Panc1 (cell line): ENCODE measurements at regions of chr11 and their contacts with region 1.

Region 1: GRCh38 chr11:117621226-117621625 is 175.8 kb downstream of the DSCAML1 start:
- DNase-seq: no peak
- ATAC-seq: peak; percentile 68
- H3K4me3 ChIP-seq: no peak overlapping the region
- H3K27ac ChIP-seq: no peak overlapping the region
- H3K4me1 ChIP-seq: no peaks in the 10 kb centered on the region
- H3K27me3 ChIP-seq: peaks cover 2% of the 10 kb centered on the region; the same call in 1 of the 2 replicates
- CTCF ChIP-seq: peak; percentile 83

Region 2: GRCh38 chr11:117199061-117199915 is 421.9 kb before region 1 on chr11 and contains the start of gene TAGLN:
- CTCF ChIA-PET with region 1: no interaction called
- POLR2A ChIA-PET with region 1: no interaction called
- in situ Hi-C with region 1: no loop called
- intact Hi-C with region 1: no loop called
- DNase-seq: no peak
- ATAC-seq: peak; percentile 43
- H3K4me3 ChIP-seq: peak within 1 kb of the TSS in 1 of 2 experiments; percentile 11; a peak in 1 of 4 replicates
- H3K27ac ChIP-seq: no peak within 1 kb of the TSS
- H3K4me1 ChIP-seq: peaks cover 6% of the 10 kb centered on the region
- H3K27me3 ChIP-seq: no peaks in the 10 kb centered on the region
- CTCF ChIP-seq: no peak
- total RNA-seq, gene TAGLN: 6.4 TPM

Region 3: GRCh38 chr11:117817368-117818040 is 196.3 kb after region 1 on chr11:
- CTCF ChIA-PET with region 1: interaction called, 10 read pairs
- POLR2A ChIA-PET with region 1: no interaction called
- in situ Hi-C with region 1: no loop called
- intact Hi-C with region 1: no loop called
- DNase-seq: peak; percentile 69
- ATAC-seq: peak; percentile 77
- H3K4me3 ChIP-seq: no peak overlapping the region
- H3K27ac ChIP-seq: 0 out of 2 replicates have a peak overlapping the region, but pooled peaks have one; percentile 4
- H3K4me1 ChIP-seq: peaks cover 20% of the 10 kb centered on the region
- H3K27me3 ChIP-seq: no peaks in the 10 kb centered on the region; the same call in 1 of the 2 replicates
- CTCF ChIP-seq: peak; percentile 100